Caco-2 (cell line): ENCODE measurements at regions of chr1 and their contacts with region 1.

Region 1: GRCh38 chr1:62286786-62287224 is 32.4 kb downstream of the KANK4 start:
- DNase-seq: peak; percentile 73 to 84
- H3K4me3 ChIP-seq: peak overlapping the region; percentile 9
- H3K4me3 Mint-ChIP-seq: peak overlapping the region; percentile 68
- H3K27ac Mint-ChIP-seq: peak overlapping the region; percentile 80
- H3K4me1 ChIP-seq: peaks cover 50% of the 10 kb centered on the region
- H3K4me1 Mint-ChIP-seq: peaks cover 55% of the 10 kb centered on the region
- H3K27me3 ChIP-seq: no peaks in the 10 kb centered on the region
- H3K27me3 Mint-ChIP-seq: no peaks in the 10 kb centered on the region
- CTCF ChIP-seq: no peak

Region 2: GRCh38 chr1:61921435-61921834 is 365.4 kb before region 1 on chr1:
- CTCF ChIA-PET with region 1: interaction called, 11 read pairs
- POLR2A ChIA-PET with region 1: no interaction called
- intact Hi-C with region 1: no loop called
- DNase-seq: no peak
- H3K4me3 ChIP-seq: no peak overlapping the region
- H3K4me3 Mint-ChIP-seq: no peak overlapping the region
- H3K27ac Mint-ChIP-seq: no peak overlapping the region
- H3K4me1 ChIP-seq: peaks cover 8% of the 10 kb centered on the region
- H3K4me1 Mint-ChIP-seq: no peaks in the 10 kb centered on the region
- H3K27me3 ChIP-seq: no peaks in the 10 kb centered on the region
- H3K27me3 Mint-ChIP-seq: no peaks in the 10 kb centered on the region
- CTCF ChIP-seq: no peak

Region 3: GRCh38 chr1:62175568-62176179 is 111.1 kb before region 1 on chr1:
- CTCF ChIA-PET with region 1: interaction called, 7 read pairs
- POLR2A ChIA-PET with region 1: no interaction called
- intact Hi-C with region 1: loop called (anchors 2 kb)
- DNase-seq: peak in 1 of 2 experiments; percentile 53
- H3K4me3 ChIP-seq: no peak overlapping the region
- H3K4me3 Mint-ChIP-seq: no peak overlapping the region
- H3K27ac Mint-ChIP-seq: no peak overlapping the region
- H3K4me1 ChIP-seq: no peaks in the 10 kb centered on the region
- H3K4me1 Mint-ChIP-seq: peaks cover 13% of the 10 kb centered on the region
- H3K27me3 ChIP-seq: no peaks in the 10 kb centered on the region
- H3K27me3 Mint-ChIP-seq: no peaks in the 10 kb centered on the region
- CTCF ChIP-seq: peak; percentile 65

Region 4: GRCh38 chr1:62237361-62237760 is 49.4 kb before region 1 on chr1:
- CTCF ChIA-PET with region 1: interaction called, 7 read pairs
- POLR2A ChIA-PET with region 1: no interaction called
- intact Hi-C with region 1: loop called (anchors 2 kb)
- DNase-seq: no peak
- H3K4me3 ChIP-seq: no peak overlapping the region
- H3K4me3 Mint-ChIP-seq: no peak overlapping the region
- H3K27ac Mint-ChIP-seq: peak overlapping the region; percentile 88
- H3K4me1 ChIP-seq: peaks cover 32% of the 10 kb centered on the region
- H3K4me1 Mint-ChIP-seq: peaks cover 43% of the 10 kb centered on the region
- H3K27me3 ChIP-seq: no peaks in the 10 kb centered on the region
- H3K27me3 Mint-ChIP-seq: no peaks in the 10 kb centered on the region
- CTCF ChIP-seq: no peak

Region 5: GRCh38 chr1:62263006-62263813 is 23.6 kb before region 1 on chr1:
- CTCF ChIA-PET with region 1: no interaction called
- POLR2A ChIA-PET with region 1: no interaction called
- intact Hi-C with region 1: no loop called
- DNase-seq: no peak
- H3K4me3 ChIP-seq: no peak overlapping the region
- H3K4me3 Mint-ChIP-seq: no peak overlapping the region
- H3K27ac Mint-ChIP-seq: no peak overlapping the region
- H3K4me1 ChIP-seq: peaks cover 4% of the 10 kb centered on the region; the same call in 1 of the 2 replicates
- H3K4me1 Mint-ChIP-seq: no peaks in the 10 kb centered on the region
- H3K27me3 ChIP-seq: no peaks in the 10 kb centered on the region
- H3K27me3 Mint-ChIP-seq: no peaks in the 10 kb centered on the region
- CTCF ChIP-seq: no peak